Activated T-helper 1 cell treated with anti-CD3 and anti-CD28 coated beads, Interleukin-12 subunit alpha, Interleukin-12 subunit beta, Interleukin-2, Interleukin-4 antibody, amounts not matched to agents 30 ng/mL and 10 ng/mL and 1 ng/mL, durations not matched to agents 14 hours and 24 hours and 36 hours (primary cell): ENCODE measurements at regions of chr12 and their contacts with region 1.

Region 1: DNA sequence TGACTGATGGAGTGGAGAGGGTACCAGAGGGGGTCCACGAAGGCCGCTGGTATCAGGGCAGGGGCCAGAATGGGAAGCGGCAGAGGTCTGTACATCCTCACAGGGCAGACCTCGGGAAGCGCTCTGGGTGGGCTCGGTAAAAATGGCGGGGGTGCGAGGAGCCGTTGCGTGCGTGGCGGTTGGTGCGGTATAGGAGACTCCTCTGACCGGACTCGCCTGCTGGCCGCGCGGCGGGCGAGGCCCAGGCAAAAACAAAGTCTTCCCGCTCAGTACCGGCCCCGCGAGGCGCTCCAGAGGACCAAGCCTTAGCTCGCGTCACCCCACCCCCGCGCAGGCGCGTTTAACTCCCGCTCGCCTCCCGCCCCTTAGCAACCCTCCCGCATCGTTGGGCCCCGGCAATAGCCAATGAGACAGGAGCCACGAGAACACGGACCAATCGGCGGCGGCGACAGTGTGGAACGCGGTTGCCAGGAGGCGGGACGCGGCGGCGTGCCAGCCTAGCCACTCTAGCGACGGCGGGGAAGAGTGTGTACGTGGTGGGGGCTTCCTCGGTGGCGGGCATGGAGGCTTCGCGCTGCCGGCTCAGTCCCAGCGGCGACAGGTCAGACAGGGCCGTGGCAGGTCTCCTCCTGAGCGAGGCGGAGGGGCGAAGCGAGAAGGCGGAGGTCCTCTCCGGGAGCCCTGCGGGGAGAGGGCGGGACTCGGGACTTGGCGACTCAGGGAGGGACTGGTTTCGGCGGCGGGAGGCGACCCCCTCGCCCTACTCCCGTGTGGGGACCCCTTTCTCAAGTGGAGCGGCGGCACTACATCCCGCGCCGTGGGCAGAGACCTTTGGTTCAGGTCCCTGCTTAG is at the start of gene TULP3:
- DNase-seq: peak; percentile 97
- H3K4me3 Mint-ChIP-seq: peak within 1 kb of the TSS; percentile 91
- H3K27ac Mint-ChIP-seq: peak within 1 kb of the TSS; percentile 88
- H3K4me1 Mint-ChIP-seq: peaks cover 27% of the 10 kb centered on the region
- H3K27me3 Mint-ChIP-seq: no peaks in the 10 kb centered on the region
- total RNA-seq, gene TULP3: 7.9 and 8.6 TPM in 2 replicates

Region 2: GRCh38 chr12:2004113-2004929 is 886.3 kb before region 1 on chr12 and contains the start of gene DCP1B:
- intact Hi-C with region 1: loop called (anchors 2 kb)
- DNase-seq: peak; percentile 93
- H3K4me3 Mint-ChIP-seq: peak within 1 kb of the TSS; percentile 97
- H3K27ac Mint-ChIP-seq: peak within 1 kb of the TSS; percentile 95
- H3K4me1 Mint-ChIP-seq: peaks cover 31% of the 10 kb centered on the region
- H3K27me3 Mint-ChIP-seq: peaks cover 3% of the 10 kb centered on the region
- total RNA-seq, gene DCP1B: 8.8 and 9.8 TPM in 2 replicates

Region 3: DNA sequence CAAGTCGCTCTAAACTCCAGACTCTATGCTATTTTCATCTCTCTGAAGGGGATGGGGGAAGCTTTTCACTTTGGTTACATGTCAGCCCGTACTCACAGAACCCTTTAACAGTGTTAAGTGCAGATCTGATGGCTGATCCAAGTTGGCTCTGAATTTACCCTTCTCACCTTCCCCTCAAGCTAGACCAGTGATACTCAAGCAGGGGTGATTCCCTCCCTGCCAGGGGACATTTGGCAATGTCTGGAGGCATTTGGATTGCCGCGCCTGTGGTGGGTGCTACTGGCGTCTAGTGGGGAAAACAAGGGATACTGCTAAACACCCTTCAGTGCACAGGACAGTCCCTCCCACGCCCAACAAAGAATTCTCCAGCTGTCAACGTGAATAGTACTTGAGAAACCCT is 27.7 kb before region 1 on chr12:
- intact Hi-C with region 1: loop called (anchors 1 kb)
- DNase-seq: no peak
- H3K4me3 Mint-ChIP-seq: no peak overlapping the region
- H3K27ac Mint-ChIP-seq: no peak overlapping the region
- H3K4me1 Mint-ChIP-seq: peaks cover 15% of the 10 kb centered on the region
- H3K27me3 Mint-ChIP-seq: no peaks in the 10 kb centered on the region

Region 4: DNA sequence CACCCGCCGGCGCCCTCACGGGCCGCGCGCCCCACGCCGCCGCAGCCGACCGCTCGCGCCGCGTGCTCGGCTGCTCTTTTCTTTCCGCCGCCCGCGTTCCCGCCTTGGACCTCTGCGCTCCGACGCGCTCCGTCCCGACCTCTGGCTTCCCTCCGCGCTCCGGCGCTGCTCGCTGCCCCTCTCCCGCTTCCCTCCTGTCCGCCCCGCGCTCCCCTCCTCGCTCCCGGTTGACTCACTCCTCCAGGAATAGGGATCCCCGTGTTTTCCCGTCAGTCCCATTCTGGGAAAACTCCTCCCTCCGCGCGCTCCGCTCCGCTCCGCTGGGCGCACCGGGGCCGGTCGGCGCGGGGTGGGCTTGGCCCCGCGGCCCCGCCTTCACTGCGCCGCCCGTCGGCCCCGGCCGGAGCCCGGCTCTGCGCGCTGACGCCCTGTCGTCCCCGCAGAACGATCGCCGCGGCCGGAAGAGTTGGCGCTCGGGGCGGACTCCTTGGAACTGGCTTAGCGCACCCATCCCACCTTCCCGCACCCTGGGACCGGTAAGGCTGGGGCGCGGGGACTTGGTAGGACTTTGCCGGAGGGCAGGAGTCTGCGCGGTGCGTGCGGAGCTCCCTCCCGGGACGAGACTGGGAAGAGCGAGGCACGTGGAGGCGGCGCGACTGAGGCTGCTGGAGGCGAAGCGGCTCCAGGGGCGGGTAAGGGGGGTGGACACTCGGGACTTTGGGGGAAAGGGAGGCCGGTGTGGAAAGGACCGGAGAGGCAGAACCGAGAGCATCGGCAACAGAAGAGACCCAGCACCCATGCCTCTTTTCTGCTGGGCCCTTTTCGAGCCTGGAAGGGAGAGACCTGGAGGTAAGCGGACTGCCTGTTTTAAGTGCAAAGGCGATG is 69.1 kb after region 1 on chr12:
- intact Hi-C with region 1: loop called (anchors 2 kb)
- DNase-seq: no peak
- H3K4me3 Mint-ChIP-seq: peak overlapping the region; percentile 74
- H3K27ac Mint-ChIP-seq: peak overlapping the region; percentile 15
- H3K4me1 Mint-ChIP-seq: peaks cover 18% of the 10 kb centered on the region
- H3K27me3 Mint-ChIP-seq: peaks cover 63% of the 10 kb centered on the region

Region 5: DNA sequence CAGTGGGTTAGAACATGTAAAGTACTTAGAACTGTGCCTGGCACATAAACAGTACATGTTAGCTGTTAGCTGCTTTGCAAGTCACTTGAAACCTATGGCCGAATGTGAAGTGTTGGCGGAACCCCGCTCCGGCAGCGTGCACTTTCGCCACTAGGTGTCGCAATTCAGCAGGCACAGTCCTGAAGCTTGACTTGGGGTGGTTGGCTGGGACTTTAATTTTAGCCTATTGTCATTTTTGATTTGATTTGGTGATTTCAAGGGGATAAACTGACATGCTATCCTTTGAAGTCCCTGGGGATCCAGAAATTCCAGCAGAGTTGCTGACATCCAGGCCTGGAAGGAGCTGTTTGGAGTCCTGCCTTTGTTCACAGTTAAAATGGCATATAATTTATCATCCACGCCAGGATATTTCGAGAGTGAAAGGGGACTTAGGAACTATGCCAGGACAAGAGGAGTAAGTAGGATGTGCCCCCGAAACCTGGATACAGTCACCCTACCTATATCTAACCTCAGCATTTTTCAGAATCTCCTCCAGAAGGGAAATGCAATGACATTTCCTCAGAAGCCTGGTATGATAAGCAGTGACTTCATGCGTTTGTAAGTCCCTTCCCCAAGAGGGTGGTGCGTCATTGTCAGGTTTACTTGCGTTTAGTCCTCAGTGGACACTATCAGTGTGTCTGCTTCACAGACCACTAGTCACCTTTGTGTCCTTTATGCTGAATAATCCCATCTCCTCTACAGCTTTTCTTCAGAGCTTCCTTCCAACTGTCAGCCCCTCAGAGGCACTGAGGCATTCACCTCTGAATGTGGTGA is 183.0 kb after region 1 on chr12:
- intact Hi-C with region 1: loop called (anchors 2 kb)
- DNase-seq: peak; percentile 71
- H3K4me3 Mint-ChIP-seq: peak overlapping the region; percentile 15
- H3K27ac Mint-ChIP-seq: no peak overlapping the region
- H3K4me1 Mint-ChIP-seq: peaks cover 10% of the 10 kb centered on the region
- H3K27me3 Mint-ChIP-seq: peaks cover 27% of the 10 kb centered on the region